Transverse colon (tissue), 4 donors: ENCODE measurements at regions of chr1 and their contacts with region 1.

Region 1: DNA sequence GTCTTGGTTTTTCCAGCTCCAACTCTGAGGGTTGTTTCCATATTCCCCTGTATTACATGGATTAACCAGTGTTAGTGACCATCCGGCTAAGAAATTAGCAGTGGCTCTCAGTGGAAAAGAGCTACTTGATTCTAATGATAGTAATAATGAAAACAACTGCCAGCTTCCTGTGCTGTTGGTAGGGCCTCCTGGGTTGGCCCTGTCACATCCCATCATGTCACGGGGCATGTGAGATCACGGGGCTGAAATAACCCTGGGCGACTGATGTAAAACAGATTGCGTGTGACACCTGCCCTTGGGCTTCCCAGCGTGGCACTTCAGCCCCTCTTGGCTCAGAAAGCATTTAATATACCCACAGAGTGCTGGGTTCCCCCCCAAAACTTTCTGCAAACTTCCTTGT is 149.0 kb downstream of the ROR1 start:
- DNase-seq: no peak
- H3K4me3 ChIP-seq: no peak overlapping the region
- H3K27ac ChIP-seq: no peak overlapping the region
- H3K4me1 ChIP-seq: peaks cover 9 to 27% (median 22%) of the 10 kb centered on the region in 4 donors
- H3K27me3 ChIP-seq: no peaks in the 10 kb centered on the region
- CTCF ChIP-seq: no peak
- EP300 ChIP-seq: no peak
- POLR2A ChIP-seq: no peak

Region 2: DNA sequence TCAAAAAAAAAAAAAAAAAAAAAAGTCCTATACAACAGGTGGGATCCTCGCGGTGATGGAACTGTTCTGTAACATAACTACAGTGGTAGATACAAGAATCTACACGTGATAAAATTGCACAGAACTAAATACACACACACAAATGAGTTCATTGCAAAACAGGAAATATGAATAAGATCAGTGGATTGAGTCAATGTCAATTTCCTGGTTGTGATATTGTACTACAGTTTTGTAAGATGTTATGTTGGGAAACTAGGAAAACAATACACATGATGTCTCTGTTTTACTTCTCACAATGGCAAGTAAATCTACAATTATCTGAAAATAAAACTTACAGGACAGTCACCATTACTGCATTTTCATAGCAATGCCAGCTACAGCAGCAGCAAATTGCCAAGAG is 459.6 kb before region 1 on chr1:
- in situ Hi-C with region 1: no loop called
- intact Hi-C with region 1: no loop called
- DNase-seq: no peak
- H3K4me3 ChIP-seq: no peak overlapping the region
- H3K27ac ChIP-seq: no peak overlapping the region
- H3K4me1 ChIP-seq: no peaks in the 10 kb centered on the region
- H3K27me3 ChIP-seq: no peaks in the 10 kb centered on the region
- CTCF ChIP-seq: no peak
- EP300 ChIP-seq: no peak
- POLR2A ChIP-seq: no peak

Region 3: DNA sequence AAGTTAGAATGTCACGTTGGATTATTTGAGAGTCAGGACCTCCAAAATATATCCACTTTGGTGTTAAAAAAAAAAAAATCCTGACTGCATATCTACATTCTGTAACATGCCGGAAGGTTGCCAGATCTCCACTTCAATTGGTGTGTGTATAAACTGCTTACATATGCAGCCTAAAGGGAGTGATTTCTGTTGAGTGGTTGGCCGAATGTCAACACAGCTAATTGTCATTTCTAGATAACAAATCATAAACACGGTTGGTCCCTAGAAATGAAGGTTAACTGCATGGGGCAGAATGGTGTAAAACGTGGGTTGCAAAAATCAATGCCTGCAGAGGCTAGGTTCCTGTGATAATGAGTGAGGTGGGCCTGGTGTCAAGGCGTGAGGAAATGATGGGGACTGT is 164.1 kb before region 1 on chr1:
- in situ Hi-C with region 1: no loop called
- intact Hi-C with region 1: no loop called
- DNase-seq: peak; percentile 67
- H3K4me3 ChIP-seq: no peak overlapping the region
- H3K27ac ChIP-seq: peak overlapping the region in 1 of 4 donors; percentile 45
- H3K4me1 ChIP-seq: peaks cover 0 to 9% (median 2%) of the 10 kb centered on the region in 4 donors
- H3K27me3 ChIP-seq: no peaks in the 10 kb centered on the region
- CTCF ChIP-seq: no peak
- EP300 ChIP-seq: no peak
- POLR2A ChIP-seq: no peak

Region 4: GRCh38 chr1:63813829-63814277 is 109.0 kb before region 1 on chr1:
- in situ Hi-C with region 1: no loop called
- intact Hi-C with region 1: no loop called
- DNase-seq: no peak
- H3K4me3 ChIP-seq: no peak overlapping the region
- H3K27ac ChIP-seq: peak overlapping the region; percentile 13 to 65 (median 52)
- H3K4me1 ChIP-seq: peaks cover 4 to 38% (median 10%) of the 10 kb centered on the region in 4 donors
- H3K27me3 ChIP-seq: no peaks in the 10 kb centered on the region
- CTCF ChIP-seq: no peak
- EP300 ChIP-seq: no peak
- POLR2A ChIP-seq: no peak

Region 5: GRCh38 chr1:63857478-63857877 is 65.4 kb before region 1 on chr1:
- in situ Hi-C with region 1: no loop called
- intact Hi-C with region 1: loop called (anchors 2 kb)
- DNase-seq: no peak
- H3K4me3 ChIP-seq: no peak overlapping the region
- H3K27ac ChIP-seq: no peak overlapping the region
- H3K4me1 ChIP-seq: no peaks in the 10 kb centered on the region
- H3K27me3 ChIP-seq: no peaks in the 10 kb centered on the region
- CTCF ChIP-seq: no peak
- EP300 ChIP-seq: no peak
- POLR2A ChIP-seq: no peak